ENCODE measurements at regions of chrX and their contacts with region 1.

Region 1: GRCh38 chrX:109911046-109911445 is 91.9 kb upstream of the TMEM164 start:
- DNase-seq: no peak
- ATAC-seq: no peak

Region 2: DNA sequence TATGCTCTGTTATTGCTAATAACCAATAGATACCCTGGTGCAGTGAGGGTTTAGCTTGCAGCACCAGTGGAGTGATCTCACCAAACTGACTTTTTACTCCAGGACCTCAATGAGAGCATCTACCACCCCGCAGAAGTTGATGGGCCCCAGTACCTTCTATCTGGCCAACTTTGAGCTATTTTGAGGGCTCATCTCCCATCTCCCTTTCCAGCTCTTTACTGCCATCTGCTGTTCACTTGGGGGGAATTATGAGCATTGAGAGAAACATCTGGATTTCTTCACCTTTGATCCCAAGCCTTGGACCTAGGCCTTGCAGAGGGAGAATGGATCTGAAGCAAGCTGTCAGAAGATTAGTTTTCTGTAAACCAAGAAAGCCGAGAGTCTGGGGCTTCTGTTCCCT is 235.5 kb after region 1 on chrX:
- intact Hi-C with region 1: loop called in 1 of 2 experiments (anchors 10 kb)
- DNase-seq: peak in 1 of 2 donors; percentile 18
- ATAC-seq: peak; percentile 87